RWPE1 (cell line): ENCODE measurements at regions of chr1 and their contacts with region 1.

Region 1: GRCh38 chr1:9615316-9616063 is 26.8 kb downstream of the TMEM201 start:
- DNase-seq: peak; percentile 53
- H3K27ac ChIP-seq: peak overlapping the region; percentile 34; the same call in 1 of the 2 replicates
- CTCF ChIP-seq: peak; percentile 67

Region 2: DNA sequence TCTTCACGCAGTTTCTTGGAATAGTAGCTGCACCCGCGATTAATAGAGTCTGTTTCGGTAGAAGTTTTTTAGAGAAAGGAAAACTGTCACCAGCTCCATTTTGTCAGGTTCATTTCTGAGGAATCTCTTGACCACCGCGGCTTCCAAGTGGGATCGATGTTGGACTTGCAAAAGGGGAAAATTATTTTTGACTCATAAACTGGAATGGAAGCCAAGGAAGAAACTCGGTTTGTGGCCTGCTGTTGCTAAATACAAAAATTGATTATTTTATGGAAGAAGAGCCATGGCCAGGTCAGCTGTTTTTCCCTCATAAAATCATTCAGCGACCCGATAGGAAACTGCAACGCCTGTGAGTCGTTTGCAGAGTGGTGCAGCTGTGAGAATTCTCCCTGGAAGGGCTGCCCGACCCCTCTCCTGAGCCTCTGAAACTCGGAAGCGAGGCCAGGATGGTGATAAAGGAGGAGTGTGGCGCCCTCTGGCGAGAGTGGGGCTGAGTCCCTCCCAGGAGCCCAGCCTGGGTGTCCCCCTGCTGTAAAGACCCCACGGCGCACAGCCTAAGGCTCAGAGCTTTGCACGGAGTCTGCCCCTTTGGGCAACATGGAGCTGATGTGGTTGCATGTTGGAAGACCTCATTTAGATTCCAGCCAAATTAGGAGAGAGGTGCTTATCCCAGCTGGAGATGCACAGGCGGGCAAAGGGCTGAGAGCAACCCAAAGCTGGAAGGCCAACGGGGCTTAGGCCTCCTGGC is 159.8 kb before region 1 on chr1:
- CTCF ChIA-PET with region 1: no interaction called
- POLR2A ChIA-PET with region 1: no interaction called
- DNase-seq: peak; percentile 35
- H3K27ac ChIP-seq: no peak overlapping the region
- CTCF ChIP-seq: peak; percentile 62

Region 3: DNA sequence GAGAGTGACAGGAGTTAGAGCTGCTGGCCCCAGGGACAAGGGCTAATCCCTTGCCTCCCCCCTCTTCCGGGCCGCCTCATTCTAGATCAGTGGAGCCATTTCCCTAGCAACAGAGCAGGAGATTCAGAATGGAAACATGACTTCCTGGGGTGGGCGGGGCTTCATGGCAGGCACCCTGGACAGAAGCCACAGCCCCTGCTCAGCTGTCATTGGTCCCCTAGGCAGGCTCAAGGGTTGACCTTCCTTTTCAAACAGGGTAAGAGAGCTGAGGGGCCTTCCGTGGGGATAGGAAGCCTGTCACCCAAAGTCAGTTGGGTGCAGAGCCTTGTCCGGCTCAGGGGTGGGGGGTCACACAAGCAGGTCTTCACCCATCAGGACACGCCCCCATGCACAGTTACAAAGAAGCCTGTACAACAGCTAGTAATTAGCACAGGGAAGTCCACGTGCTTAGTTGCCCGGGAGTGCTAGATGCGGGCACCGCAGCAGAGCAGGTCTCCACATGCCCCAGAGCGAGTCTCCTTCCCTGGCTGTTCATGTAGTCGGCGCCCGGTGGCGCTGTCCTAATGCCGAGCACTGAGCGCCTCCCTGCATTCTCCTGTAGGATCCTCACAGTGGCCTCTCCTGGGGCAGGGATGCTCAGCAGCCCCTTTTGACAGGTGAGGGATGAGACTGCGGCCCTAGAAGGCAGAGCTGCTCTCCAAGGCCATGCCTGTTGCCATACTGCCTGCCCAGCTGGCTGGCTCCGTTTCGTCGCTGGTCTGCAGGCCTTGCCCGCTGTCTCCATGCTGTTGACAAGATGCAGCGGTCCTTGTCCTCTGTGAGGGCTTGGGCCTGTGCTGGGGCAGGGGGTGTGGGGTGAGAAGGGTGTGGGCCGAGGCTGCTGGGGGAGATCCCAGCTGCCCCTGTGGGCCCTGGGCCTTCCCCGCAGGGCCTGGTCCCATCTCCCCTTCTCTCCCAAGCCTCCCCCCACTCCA is 21.7 kb before region 1 on chr1:
- CTCF ChIA-PET with region 1: interaction called, 12 read pairs
- POLR2A ChIA-PET with region 1: no interaction called
- DNase-seq: peak; percentile 75
- H3K27ac ChIP-seq: peak overlapping the region; percentile 83
- CTCF ChIP-seq: peak; percentile 65